CD8-positive, alpha-beta T cell (primary cell): ENCODE measurements at regions of chr9 and their contacts with region 1.

Region 1: DNA sequence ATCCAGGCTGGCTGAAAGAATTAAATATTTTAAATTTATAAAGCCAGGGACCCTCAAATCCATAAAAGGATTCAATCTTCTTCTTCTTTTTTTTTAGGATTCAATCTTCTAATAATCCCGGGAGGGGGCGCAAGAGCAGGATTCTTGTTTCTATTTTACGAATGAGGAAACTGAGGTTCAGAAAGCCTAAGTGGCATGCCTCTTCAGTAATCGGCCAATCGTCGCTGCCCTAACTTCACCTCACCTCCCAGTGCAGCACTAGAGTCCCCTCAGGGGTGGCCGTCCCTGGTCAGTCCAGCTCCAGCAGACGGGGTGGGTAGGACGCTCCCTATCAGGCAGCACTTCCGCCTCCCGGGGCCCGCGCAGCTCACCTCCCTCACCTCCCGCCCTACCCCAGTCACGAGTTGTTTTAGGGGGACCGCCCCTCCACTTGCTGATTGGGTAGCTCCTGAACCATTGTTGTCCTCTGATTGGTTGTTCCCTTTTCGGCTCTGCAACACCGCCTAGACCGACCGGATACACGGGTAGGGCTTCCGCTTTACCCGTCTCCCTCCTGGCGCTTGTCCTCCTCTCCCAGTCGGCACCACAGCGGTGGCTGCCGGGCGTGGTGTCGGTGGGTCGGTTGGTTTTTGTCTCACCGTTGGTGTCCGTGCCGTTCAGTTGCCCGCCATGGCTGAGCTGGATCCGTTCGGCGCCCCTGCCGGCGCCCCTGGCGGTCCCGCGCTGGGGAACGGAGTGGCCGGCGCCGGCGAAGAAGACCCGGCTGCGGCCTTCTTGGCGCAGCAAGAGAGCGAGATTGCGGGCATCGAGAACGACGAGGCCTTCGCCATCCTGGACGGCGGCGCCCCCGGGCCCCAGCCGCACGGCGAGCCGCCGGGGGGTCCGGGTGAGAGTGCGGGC is at the start of gene CLTA:
- DNase-seq: peak; percentile 84 to 99 (median 93)
- ATAC-seq: peak; percentile 97
- H3K4me3 ChIP-seq: peak within 1 kb of the TSS; percentile 63 to 95
- H3K4me3 Mint-ChIP-seq: peak within 1 kb of the TSS; percentile 94
- H3K27ac ChIP-seq: peak within 1 kb of the TSS; percentile 74 to 80
- H3K27ac Mint-ChIP-seq: peak within 1 kb of the TSS; percentile 91
- H3K4me1 ChIP-seq: peaks cover 37% of the 10 kb centered on the region
- H3K4me1 Mint-ChIP-seq: peaks cover 50% of the 10 kb centered on the region
- H3K27me3 ChIP-seq: no peaks in the 10 kb centered on the region
- H3K27me3 Mint-ChIP-seq: no peaks in the 10 kb centered on the region
- CTCF ChIP-seq: peak; percentile 55
- total RNA-seq, gene CLTA: 39.1 to 39.6 TPM

Region 2: DNA sequence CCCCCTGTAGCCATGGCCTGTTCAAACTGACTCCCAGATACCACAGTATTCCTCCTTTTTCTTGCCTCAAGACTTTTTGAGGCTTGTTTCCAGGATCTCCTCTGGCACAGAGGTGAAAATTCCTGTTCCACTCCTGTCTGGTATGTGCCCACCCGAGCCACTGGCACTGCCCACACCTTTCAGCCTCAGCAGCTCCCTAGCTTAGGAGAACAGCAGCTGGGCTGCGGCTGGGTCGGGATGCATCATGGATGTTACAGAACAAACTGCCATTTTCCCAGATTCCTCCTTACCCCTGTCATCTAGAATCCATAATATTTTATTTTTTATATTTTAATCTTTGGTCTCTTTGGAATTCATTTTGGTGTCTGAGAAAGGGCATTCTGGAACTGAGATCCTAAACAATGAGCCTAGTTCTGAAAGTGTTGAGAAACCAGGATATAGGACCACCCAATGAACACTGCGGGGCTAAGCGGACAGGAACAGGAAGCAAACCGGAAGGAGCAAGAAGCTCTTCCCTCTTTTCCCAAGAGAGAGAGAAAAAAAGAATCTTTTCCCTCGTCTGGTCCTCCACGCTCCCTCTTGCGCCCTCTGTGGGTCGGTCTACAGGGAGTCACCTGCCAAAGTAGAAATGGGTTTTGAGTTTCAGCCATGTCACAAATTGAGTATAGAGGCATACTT is 245.2 kb before region 1 on chr9:
- CTCF ChIA-PET with region 1: no interaction called
- POLR2A ChIA-PET with region 1: no interaction called
- intact Hi-C with region 1: no loop called
- DNase-seq: peak; percentile 27 to 72 (median 62)
- ATAC-seq: peak; percentile 70
- H3K4me3 ChIP-seq: no peak overlapping the region
- H3K4me3 Mint-ChIP-seq: no peak overlapping the region
- H3K27ac ChIP-seq: no peak overlapping the region
- H3K27ac Mint-ChIP-seq: no peak overlapping the region
- H3K4me1 ChIP-seq: peaks cover 30% of the 10 kb centered on the region
- H3K4me1 Mint-ChIP-seq: peaks cover 48% of the 10 kb centered on the region
- H3K27me3 ChIP-seq: no peaks in the 10 kb centered on the region
- H3K27me3 Mint-ChIP-seq: no peaks in the 10 kb centered on the region
- CTCF ChIP-seq: peak; percentile 80

Region 3: GRCh38 chr9:36136272-36136893 is 54.3 kb before region 1 on chr9 and contains the start of gene GLIPR2:
- CTCF ChIA-PET with region 1: no interaction called
- POLR2A ChIA-PET with region 1: no interaction called
- intact Hi-C with region 1: loop called (anchors 1 to 2 kb)
- DNase-seq: peak; percentile 52 to 89 (median 75)
- ATAC-seq: peak; percentile 96
- H3K4me3 ChIP-seq: peak within 1 kb of the TSS; percentile 79 to 82
- H3K4me3 Mint-ChIP-seq: peak within 1 kb of the TSS; percentile 92
- H3K27ac ChIP-seq: peak within 1 kb of the TSS; percentile 56 to 58
- H3K27ac Mint-ChIP-seq: peak within 1 kb of the TSS; percentile 86
- H3K4me1 ChIP-seq: peaks cover 47% of the 10 kb centered on the region
- H3K4me1 Mint-ChIP-seq: peaks cover 49% of the 10 kb centered on the region
- H3K27me3 ChIP-seq: no peaks in the 10 kb centered on the region
- H3K27me3 Mint-ChIP-seq: no peaks in the 10 kb centered on the region
- CTCF ChIP-seq: peak; percentile 26
- total RNA-seq, gene GLIPR2: 8.6 to 10.2 TPM

Region 4: GRCh38 chr9:36204906-36205547 is 14.4 kb after region 1 on chr9:
- CTCF ChIA-PET with region 1: interaction called, 16 read pairs
- POLR2A ChIA-PET with region 1: interaction called, 6 read pairs
- intact Hi-C with region 1: no loop called
- DNase-seq: no peak
- ATAC-seq: no peak
- H3K4me3 ChIP-seq: no peak overlapping the region
- H3K4me3 Mint-ChIP-seq: no peak overlapping the region
- H3K27ac ChIP-seq: no peak overlapping the region
- H3K27ac Mint-ChIP-seq: no peak overlapping the region
- H3K4me1 ChIP-seq: peaks cover 14% of the 10 kb centered on the region
- H3K4me1 Mint-ChIP-seq: peaks cover 41% of the 10 kb centered on the region
- H3K27me3 ChIP-seq: no peaks in the 10 kb centered on the region
- H3K27me3 Mint-ChIP-seq: no peaks in the 10 kb centered on the region
- CTCF ChIP-seq: no peak

Region 5: DNA sequence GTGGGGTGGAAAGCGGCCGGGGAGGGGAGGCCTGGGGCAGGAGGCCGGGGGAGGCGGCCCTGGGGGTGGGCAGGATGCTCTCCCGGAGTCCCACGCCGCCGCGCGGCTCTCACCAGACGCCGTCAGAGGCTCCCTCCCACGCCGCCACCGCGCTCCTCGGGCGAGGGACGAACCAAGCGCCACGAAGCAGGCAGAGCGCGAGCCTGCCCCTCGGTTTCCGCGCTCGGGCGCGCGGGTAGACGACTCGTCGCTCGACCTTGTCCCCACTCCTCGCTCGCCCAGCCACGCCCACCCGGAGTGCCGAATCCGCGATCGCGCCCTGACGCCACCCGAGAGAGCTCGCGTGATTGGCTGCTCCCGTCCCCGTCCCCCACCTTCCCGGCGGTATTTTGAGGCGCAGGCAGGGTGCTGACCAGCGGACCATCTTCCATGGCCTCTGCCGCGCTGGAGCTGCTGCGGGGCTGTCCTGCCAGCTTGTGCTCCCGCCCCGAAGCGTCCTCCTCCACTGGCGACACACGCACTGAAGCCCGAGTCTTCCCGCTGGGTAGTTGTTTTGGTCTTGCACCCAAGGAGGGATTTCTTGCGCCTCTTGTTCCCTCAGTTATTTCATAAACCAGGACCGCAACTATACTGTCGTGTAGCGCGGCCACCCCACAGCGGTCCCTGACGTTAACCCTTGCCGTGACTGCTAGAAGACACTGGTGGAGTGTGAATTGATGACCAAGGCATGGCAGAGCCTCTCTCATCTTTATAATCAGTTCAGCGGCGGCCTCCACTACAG is 67.8 kb after region 1 on chr9 and contains the start of gene GNE:
- CTCF ChIA-PET with region 1: interaction called, 3 read pairs
- POLR2A ChIA-PET with region 1: interaction called, 8 read pairs
- intact Hi-C with region 1: loop called (anchors 1 to 2 kb)
- DNase-seq: peak; percentile 95 to 99 (median 98)
- ATAC-seq: peak; percentile 89
- H3K4me3 ChIP-seq: peak within 1 kb of the TSS; percentile 85 to 100
- H3K4me3 Mint-ChIP-seq: peak within 1 kb of the TSS; percentile 98
- H3K27ac ChIP-seq: peak within 1 kb of the TSS; percentile 90 to 91
- H3K27ac Mint-ChIP-seq: peak within 1 kb of the TSS; percentile 97
- H3K4me1 ChIP-seq: peaks cover 17% of the 10 kb centered on the region
- H3K4me1 Mint-ChIP-seq: peaks cover 16% of the 10 kb centered on the region
- H3K27me3 ChIP-seq: no peaks in the 10 kb centered on the region
- H3K27me3 Mint-ChIP-seq: no peaks in the 10 kb centered on the region
- CTCF ChIP-seq: no peak
- total RNA-seq, gene GNE: 17.3 to 17.4 TPM

Region 6: GRCh38 chr9:36328798-36329411 is 138.3 kb after region 1 on chr9:
- CTCF ChIA-PET with region 1: interaction called, 17 read pairs
- POLR2A ChIA-PET with region 1: interaction called, 3 read pairs
- intact Hi-C with region 1: loop called (anchors 1 to 2 kb)
- DNase-seq: peak in 5 of 9 experiments; percentile 11 to 76 (median 48)
- ATAC-seq: peak; percentile 75
- H3K4me3 ChIP-seq: no peak overlapping the region
- H3K4me3 Mint-ChIP-seq: no peak overlapping the region
- H3K27ac ChIP-seq: no peak overlapping the region
- H3K27ac Mint-ChIP-seq: no peak overlapping the region
- H3K4me1 ChIP-seq: no peaks in the 10 kb centered on the region
- H3K4me1 Mint-ChIP-seq: peaks cover 5% of the 10 kb centered on the region
- H3K27me3 ChIP-seq: no peaks in the 10 kb centered on the region
- H3K27me3 Mint-ChIP-seq: no peaks in the 10 kb centered on the region
- CTCF ChIP-seq: peak; percentile 92

Region 7: DNA sequence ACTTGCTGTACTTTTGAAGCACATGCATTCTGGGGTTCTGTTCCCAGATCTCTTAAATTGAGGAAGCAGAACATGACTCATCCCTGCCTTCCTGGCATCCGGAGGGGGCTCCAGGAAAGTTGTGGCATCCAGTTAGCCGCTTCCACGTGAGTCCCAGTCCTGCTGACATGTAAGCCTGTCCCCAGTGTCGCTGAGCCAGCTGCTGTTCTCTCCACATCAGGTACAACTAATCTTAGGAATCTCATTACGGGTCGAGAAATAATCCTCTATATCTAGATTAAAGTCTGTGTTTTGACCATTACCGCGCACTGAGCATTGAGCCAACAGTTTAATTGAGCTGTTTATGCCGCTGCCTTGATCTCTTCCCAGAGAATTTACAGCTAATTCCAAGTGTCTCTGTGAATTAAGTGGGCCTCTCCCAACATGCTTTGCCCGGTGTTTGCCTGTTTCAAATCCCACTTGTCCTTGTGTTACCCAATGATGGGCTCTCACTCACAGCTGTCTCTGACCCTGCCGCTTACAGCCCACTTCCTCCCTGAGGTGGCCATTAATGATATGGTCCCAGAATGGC is 1888.9 kb after region 1 on chr9:
- CTCF ChIA-PET with region 1: no interaction called
- POLR2A ChIA-PET with region 1: no interaction called
- intact Hi-C with region 1: loop called in 1 of 2 experiments (anchors 10 kb)
- DNase-seq: peak in 1 of 9 experiments; percentile 25
- ATAC-seq: no peak
- H3K4me3 ChIP-seq: no peak overlapping the region
- H3K4me3 Mint-ChIP-seq: no peak overlapping the region
- H3K27ac ChIP-seq: no peak overlapping the region
- H3K27ac Mint-ChIP-seq: no peak overlapping the region
- H3K4me1 ChIP-seq: no peaks in the 10 kb centered on the region
- H3K4me1 Mint-ChIP-seq: peaks cover 4% of the 10 kb centered on the region
- H3K27me3 ChIP-seq: no peaks in the 10 kb centered on the region
- H3K27me3 Mint-ChIP-seq: peaks cover 22% of the 10 kb centered on the region
- CTCF ChIP-seq: no peak